OCI-LY7 (cell line): ENCODE measurements at regions of chr6 and their contacts with region 1.

Region 1: GRCh38 chr6:166078294-166078693 is 89.4 kb downstream of the TBXT start:
- DNase-seq: no peak
- H3K4me3 ChIP-seq: no peak overlapping the region
- H3K27ac ChIP-seq: no peak overlapping the region
- H3K4me1 ChIP-seq: no peaks in the 10 kb centered on the region
- CTCF ChIP-seq: no peak

Region 2: DNA sequence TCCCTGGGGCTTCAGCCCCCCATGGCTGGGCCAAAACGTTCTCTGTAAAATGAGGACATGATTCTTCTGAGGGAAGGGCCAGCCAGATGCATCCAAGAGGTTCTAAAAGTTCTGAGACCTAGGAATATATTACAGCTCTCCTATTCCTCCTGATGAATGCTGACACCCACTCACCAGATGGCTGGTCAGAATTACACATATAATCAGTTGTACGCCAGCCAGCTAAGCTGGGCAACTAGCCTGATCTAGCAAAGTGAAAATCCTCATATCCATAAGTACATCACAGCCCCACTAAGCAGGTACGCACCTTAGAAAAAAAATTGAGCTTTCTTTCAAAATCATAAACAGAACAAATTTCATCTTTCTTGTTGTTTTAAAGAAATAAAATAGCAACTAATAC is 803.7 kb before region 1 on chr6:
- CTCF ChIA-PET with region 1: no interaction called
- POLR2A ChIA-PET with region 1: no interaction called
- intact Hi-C with region 1: loop called (anchors 10 kb)
- DNase-seq: no peak
- H3K4me3 ChIP-seq: no peak overlapping the region
- H3K27ac ChIP-seq: no peak overlapping the region
- H3K4me1 ChIP-seq: no peaks in the 10 kb centered on the region
- CTCF ChIP-seq: no peak